T-cell (primary cell): ENCODE measurements at regions of chr7 and their contacts with region 1.

Region 1: DNA sequence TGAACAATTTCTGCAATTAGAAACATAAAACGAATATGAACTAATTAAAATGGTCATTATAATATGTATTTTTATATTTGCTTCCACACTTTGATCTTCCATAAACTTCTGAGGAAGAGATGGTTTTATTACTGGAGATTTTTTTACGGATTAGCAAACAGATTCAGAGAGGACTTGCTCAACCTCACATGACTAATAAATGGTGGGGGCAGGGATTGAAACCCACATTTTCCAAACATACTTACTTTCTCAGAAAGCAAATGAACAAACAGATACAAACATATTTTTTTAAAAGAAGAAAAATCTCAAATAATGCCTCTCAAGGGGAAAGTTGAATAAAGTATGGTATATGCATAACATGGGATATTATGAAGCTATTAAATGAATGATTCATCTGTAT is 18.3 kb downstream of the ANKMY2 start:
- DNase-seq: no peak
- ATAC-seq: no peak
- H3K4me3 ChIP-seq: no peak overlapping the region
- H3K4me3 Mint-ChIP-seq: no peak overlapping the region
- H3K27ac ChIP-seq: no peak overlapping the region
- H3K27ac Mint-ChIP-seq: no peak overlapping the region
- H3K4me1 ChIP-seq: no peaks in the 10 kb centered on the region
- H3K4me1 Mint-ChIP-seq: peaks cover 0 to 1% (median 0%) of the 10 kb centered on the region in 3 donors
- H3K27me3 ChIP-seq: no peaks in the 10 kb centered on the region
- H3K27me3 Mint-ChIP-seq: no peaks in the 10 kb centered on the region

Region 2: GRCh38 chr7:16465469-16466361 is 161.5 kb before region 1 on chr7 and contains the start of gene SOSTDC1:
- CTCF ChIA-PET with region 1: no interaction called
- POLR2A ChIA-PET with region 1: no interaction called
- DNase-seq: no peak
- ATAC-seq: no peak
- H3K4me3 ChIP-seq: no peak within 1 kb of the TSS
- H3K4me3 Mint-ChIP-seq: peak within 1 kb of the TSS in 1 of 3 donors; percentile 36
- H3K27ac ChIP-seq: no peak within 1 kb of the TSS
- H3K27ac Mint-ChIP-seq: no peak within 1 kb of the TSS
- H3K4me1 ChIP-seq: no peaks in the 10 kb centered on the region
- H3K4me1 Mint-ChIP-seq: peaks cover 2 to 10% (median 6%) of the 10 kb centered on the region in 3 donors
- H3K27me3 ChIP-seq: peaks cover 0 to 8% of the 10 kb centered on the region in 2 experiments
- H3K27me3 Mint-ChIP-seq: peaks cover 2 to 9% of the 10 kb centered on the region in 2 donors
- total RNA-seq, gene SOSTDC1: not detected

Region 3: DNA sequence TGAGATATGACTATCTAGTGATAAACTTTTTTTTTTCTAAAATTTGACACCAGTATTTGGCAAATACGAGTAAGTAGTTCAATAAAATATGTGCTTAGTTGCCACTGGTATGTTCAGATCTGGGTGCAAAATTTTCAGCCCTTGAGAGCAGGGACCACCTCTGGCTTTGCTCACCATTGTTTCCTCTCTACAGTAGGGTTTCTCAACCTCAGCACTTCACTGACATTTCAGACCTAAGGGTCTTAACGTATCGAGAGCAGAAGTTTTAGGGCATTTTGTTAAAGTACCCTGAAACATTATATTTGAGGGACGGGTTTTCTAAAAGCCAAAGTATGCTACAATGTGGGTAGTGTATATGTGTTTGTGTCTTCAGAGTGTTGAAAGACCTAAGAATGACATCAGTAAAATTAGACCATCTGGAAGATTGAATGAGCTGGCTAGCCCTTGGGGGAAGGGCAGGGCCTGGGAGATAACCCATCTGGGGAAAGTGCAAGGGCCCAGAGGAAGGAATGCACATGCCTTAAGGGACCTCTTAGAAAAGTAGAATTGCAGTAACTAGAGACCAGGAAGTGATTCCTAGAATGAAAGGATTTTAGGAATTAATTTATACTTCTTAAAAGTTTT is 30.5 kb after region 1 on chr7:
- CTCF ChIA-PET with region 1: no interaction called
- POLR2A ChIA-PET with region 1: interaction called in 1 of 2 experiments, 25 read pairs
- DNase-seq: no peak
- ATAC-seq: no peak
- H3K4me3 ChIP-seq: no peak overlapping the region
- H3K4me3 Mint-ChIP-seq: no peak overlapping the region
- H3K27ac ChIP-seq: no peak overlapping the region
- H3K27ac Mint-ChIP-seq: no peak overlapping the region
- H3K4me1 ChIP-seq: peaks cover 0 to 2% of the 10 kb centered on the region in 2 experiments
- H3K4me1 Mint-ChIP-seq: peaks cover 41 to 51% (median 43%) of the 10 kb centered on the region in 3 donors
- H3K27me3 ChIP-seq: no peaks in the 10 kb centered on the region
- H3K27me3 Mint-ChIP-seq: no peaks in the 10 kb centered on the region

Region 4: DNA sequence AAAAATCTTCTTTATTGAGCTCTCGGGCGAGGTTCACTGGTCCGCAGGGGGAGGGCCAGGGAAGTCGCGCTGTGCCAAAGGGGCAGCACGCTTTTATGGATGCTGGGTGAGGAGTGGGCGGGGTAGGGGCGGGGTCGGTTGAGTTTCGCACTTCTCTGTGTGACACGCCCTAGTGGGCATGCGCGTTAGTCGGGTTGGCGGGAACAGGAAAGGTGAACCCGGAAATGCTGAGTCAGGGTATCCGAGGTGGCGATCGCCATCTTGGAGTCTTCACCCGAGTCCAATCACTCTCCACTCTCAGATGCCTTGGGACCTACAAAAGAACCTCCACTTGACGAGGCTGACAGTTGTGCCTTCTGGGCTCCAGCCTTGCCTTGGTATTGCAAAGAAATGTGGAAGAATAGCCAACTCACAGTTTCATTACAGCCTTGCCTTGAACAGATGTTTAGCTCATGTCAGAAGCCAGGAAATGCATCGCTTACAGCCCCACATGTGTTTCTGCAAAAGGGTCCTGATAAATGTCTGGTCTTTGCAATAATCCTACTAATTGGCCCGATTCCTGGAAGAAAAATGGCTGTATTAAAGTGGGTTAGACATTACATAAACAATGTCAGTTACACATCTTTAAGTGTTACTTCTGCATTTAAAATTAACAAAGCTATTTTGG is 735.3 kb after region 1 on chr7:
- CTCF ChIA-PET with region 1: no interaction called
- POLR2A ChIA-PET with region 1: no interaction called
- DNase-seq: no peak
- ATAC-seq: no peak
- H3K4me3 ChIP-seq: no peak overlapping the region
- H3K4me3 Mint-ChIP-seq: no peak overlapping the region
- H3K27ac ChIP-seq: no peak overlapping the region
- H3K27ac Mint-ChIP-seq: no peak overlapping the region
- H3K4me1 ChIP-seq: peaks cover 0 to 4% of the 10 kb centered on the region in 2 experiments
- H3K4me1 Mint-ChIP-seq: peaks cover 1 to 14% (median 11%) of the 10 kb centered on the region in 3 donors
- H3K27me3 ChIP-seq: no peaks in the 10 kb centered on the region
- H3K27me3 Mint-ChIP-seq: no peaks in the 10 kb centered on the region